Heart right ventricle (tissue), 16 donors: ENCODE measurements at regions of chr17 and their contacts with region 1.

Region 1: DNA sequence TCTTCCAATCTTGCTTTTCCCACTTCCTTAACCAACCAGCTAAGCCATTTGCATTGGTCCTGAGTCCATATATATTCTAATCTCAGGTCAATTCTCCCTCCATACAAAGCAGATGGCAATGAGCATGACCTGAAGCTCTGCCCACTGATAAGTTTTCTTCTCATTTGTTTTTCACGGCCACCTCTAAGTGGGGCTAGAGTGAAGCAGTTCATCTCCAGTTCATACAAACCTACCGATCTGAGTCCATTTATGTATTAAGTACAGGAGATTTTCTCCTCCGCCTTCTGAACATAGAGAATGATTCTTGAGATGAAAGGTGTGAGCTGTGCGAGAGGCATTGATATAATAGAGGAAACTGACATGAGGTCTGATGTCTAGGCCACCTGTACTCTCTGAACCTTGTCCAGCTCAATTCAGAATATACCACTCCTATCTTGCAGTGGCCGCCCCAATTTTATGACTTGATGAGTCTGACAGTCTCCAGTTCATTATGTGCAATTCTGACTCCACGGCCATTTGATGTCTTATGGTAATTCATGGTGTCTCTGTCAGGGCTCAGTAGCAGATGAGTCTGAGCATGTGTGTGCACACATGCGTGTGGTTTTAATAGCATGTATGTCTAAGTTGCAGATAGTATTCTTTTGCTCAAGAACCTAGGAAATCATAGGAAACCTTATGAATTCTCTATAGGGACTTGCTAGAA is 329.8 kb downstream of the PMP22 start:
- DNase-seq: no peak
- ATAC-seq: peak in 1 of 8 donors; percentile 45
- H3K4me3 ChIP-seq: no peak overlapping the region
- H3K27ac ChIP-seq: no peak overlapping the region
- H3K4me1 ChIP-seq: no peaks in the 10 kb centered on the region
- H3K27me3 ChIP-seq: no peaks in the 10 kb centered on the region
- CTCF ChIP-seq: peak in 2 of 9 donors; percentile 10 to 24

Region 2: DNA sequence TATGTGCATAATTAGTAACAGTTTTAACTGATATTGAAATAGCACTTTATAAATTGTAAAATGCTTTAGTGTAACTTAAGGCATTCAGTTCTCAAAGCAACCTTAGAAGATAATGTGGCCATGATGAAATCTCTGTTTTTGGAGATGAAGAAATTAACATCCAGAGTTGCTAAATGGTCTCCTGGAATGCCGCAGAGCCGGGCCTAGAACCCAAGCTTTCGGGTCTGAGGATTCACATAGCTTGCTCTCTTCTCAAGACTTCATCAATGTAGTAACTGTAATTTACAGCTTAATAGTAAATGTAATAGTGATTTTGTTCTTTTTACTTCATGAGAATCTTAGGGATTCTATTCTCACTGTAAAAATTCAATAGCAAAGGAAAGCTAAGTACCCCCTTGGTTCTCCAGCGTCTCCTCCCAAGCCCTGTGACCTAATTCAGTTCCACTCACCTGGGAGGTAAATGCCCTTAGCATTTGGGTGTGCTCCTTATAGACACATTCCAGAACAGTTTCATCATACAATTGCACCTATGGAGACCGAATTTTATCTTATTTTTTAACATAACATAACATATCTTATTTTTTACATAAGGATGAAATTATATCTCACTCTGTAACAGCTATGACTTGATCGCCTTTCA is 1605.7 kb before region 1 on chr17:
- intact Hi-C with region 1: loop called in 1 of 10 experiments (anchors 5 kb)
- DNase-seq: no peak
- ATAC-seq: no peak
- H3K4me3 ChIP-seq: no peak overlapping the region
- H3K27ac ChIP-seq: no peak overlapping the region
- H3K4me1 ChIP-seq: no peaks in the 10 kb centered on the region
- H3K27me3 ChIP-seq: peaks cover 0 to 4% (median 0%) of the 10 kb centered on the region in 7 donors
- CTCF ChIP-seq: no peak

Region 3: GRCh38 chr17:14351493-14351892 is 583.8 kb before region 1 on chr17:
- intact Hi-C with region 1: no loop called
- DNase-seq: no peak
- ATAC-seq: peak in 2 of 8 donors; percentile 22 to 58
- H3K4me3 ChIP-seq: no peak overlapping the region
- H3K27ac ChIP-seq: peak overlapping the region in 2 of 10 donors; percentile 2 to 59
- H3K4me1 ChIP-seq: peaks cover 0 to 19% (median 0%) of the 10 kb centered on the region in 9 donors
- H3K27me3 ChIP-seq: peaks cover 0 to 16% (median 10%) of the 10 kb centered on the region in 7 donors
- CTCF ChIP-seq: no peak

Region 4: GRCh38 chr17:14902297-14902696 is 33.0 kb before region 1 on chr17:
- intact Hi-C with region 1: no loop called
- DNase-seq: no peak
- ATAC-seq: no peak
- H3K4me3 ChIP-seq: no peak overlapping the region
- H3K27ac ChIP-seq: no peak overlapping the region
- H3K4me1 ChIP-seq: no peaks in the 10 kb centered on the region
- H3K27me3 ChIP-seq: no peaks in the 10 kb centered on the region
- CTCF ChIP-seq: no peak

Region 5: GRCh38 chr17:15143524-15143923 is 208.2 kb after region 1 on chr17:
- intact Hi-C with region 1: loop called in 1 of 10 experiments (anchors 5 kb)
- DNase-seq: no peak
- ATAC-seq: no peak
- H3K4me3 ChIP-seq: no peak overlapping the region
- H3K27ac ChIP-seq: no peak overlapping the region
- H3K4me1 ChIP-seq: no peaks in the 10 kb centered on the region
- H3K27me3 ChIP-seq: no peaks in the 10 kb centered on the region
- CTCF ChIP-seq: no peak

Region 6: DNA sequence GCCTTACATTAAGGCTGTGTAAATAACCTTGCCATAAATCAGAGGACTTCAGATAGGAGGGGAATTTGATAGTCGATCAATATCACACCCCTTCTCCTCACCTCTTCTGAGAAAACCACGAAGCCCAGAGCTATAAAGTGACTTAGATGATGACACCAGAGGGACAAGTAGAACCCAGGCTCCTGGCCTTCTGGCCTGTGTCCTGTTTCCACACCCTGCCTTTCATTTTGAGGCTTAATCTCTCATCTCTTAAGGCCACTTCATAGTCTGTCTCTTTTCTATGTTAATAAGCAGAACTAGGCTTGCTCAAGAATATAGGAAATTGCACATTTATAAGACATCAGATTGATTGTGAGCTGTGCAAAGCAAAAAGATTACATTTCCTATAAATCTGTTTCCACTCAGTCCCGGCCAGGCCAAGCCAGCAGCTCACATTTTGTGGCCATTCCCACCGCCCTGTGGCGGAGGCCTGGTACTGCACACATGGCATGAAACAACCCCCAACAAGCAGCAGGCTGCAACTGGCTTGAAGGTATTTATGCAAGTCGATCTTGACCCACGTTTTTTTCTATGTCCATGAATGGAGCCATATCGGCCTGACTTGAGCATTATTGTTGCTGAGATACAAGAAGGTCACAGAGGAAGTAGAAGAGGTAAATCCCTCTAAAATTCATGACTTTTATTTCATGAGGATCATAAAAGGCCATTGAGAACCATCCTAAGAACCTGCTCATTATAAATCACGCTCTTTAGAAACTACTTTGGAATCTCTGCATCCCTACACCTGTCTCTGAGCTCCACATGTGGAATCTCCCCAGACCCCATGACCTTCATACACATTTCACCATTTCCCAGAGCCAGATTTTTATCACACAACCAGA is 236.1 kb after region 1 on chr17:
- intact Hi-C with region 1: loop called in 1 of 10 experiments (anchors 10 kb)
- DNase-seq: peak; percentile 59 to 64
- ATAC-seq: peak; percentile 78 to 93 (median 82)
- H3K4me3 ChIP-seq: no peak overlapping the region
- H3K27ac ChIP-seq: no peak overlapping the region
- H3K4me1 ChIP-seq: peaks cover 0 to 3% (median 0%) of the 10 kb centered on the region in 9 donors
- H3K27me3 ChIP-seq: no peaks in the 10 kb centered on the region
- CTCF ChIP-seq: peak; percentile 60 to 83 (median 79)